GM18951 (cell line): ENCODE measurements at regions of chr4 and their contacts with region 1.

Region 1: DNA sequence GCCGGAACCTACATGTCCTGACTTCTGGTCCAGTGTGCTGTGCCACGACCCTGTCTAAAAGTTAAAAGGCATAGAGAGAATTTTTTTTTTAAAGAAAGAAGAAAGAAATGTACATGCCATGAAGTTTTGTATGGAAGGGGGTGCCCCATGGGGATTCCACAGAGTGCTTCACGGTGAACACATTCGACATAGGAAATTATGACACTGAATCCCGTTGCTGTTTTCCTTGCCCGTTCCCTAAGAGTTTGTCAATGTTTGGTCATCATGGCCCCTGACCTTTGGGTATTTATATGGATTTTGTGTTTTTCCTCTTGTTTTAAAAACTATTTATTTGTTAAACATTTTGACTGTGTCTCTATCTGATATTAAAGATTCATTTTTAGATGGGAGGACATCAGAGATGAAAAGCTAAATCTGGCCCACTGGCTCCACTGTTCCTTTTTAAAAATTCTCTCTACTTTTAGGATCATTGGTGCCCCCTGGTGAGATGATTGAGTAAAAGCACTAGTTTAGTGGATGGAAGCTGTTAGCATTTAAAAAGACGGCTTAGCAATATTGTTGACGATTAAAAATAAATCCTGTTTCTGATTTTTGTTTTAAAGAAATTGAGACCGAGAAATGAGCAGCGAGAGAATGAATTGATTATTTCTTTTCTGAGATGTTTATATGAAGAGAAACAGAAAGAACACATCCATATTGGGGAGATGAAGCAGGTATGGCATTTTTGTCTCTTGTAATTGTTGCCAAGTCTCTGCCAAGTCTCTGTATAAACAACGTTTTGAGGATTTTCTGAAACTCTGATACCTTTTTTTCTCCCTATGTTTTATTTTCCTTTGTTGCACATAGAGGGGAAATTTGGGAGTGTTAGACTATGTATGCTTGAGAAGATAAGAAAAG is 75.0 kb downstream of the PTTG2 start:
- POLR2A ChIP-seq: no peak

Region 2: DNA sequence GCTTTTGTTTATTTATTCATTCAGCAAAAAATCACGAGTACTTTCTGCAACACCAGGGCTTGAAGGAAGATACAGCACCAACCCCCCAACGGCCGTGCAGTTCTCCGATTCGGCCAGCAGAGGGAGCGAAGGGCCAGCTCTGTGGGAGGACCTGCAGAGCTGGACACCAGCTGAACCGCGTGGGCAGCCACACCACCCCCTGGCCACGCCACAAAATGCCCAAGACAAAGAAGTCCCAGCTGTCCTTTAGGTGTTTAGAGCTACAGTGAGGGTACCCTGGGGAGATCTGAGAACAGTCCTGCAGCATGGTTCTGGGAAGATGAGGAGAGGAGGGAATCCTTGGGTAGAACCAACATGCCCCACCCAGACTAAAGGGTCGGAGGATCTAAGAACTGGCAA is 432.2 kb before region 1 on chr4:
- in situ Hi-C with region 1: loop called (anchors 10 kb)
- POLR2A ChIP-seq: no peak

Region 3: DNA sequence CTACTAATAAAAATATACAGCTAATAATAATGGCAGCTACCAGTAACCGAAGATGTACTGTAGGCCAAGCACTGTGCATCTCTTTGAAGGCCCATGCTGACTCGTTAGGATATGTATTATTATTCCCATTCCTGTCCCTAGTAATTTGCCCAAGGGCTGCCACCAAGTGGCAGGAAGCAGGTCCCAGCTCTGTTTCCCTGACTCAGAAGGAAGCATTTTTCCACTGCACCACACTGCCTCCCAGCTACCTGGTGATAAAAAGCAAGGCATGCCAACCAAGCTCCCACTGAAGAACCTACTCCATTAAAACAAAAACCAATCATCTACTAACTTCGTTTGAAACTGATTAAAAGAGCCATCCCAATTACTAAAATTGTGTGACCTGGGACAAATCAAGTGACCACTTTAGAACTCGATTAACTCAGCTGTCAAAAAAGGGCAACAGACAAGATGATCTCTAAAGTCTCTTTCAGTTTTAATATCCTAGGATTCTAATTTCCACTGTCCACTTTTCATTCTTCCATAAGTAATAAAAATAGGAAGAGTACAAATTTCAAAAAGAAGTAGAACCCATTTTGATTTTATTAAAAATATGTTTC is 233.1 kb before region 1 on chr4:
- in situ Hi-C with region 1: loop called (anchors 5 kb)
- POLR2A ChIP-seq: no peak

Region 4: GRCh38 chr4:37812710-37813109 is 222.5 kb before region 1 on chr4:
- in situ Hi-C with region 1: no loop called
- POLR2A ChIP-seq: no peak

Region 5: GRCh38 chr4:37873386-37873785 is 161.8 kb before region 1 on chr4:
- in situ Hi-C with region 1: no loop called
- POLR2A ChIP-seq: no peak